A549 (cell line): ENCODE measurements at regions of chr12 and their contacts with region 1.

Region 1: GRCh38 chr12:6285063-6285477 is 25.4 kb upstream of the PLEKHG6 start:
- DNase-seq: peak; percentile 73 to 95
- ATAC-seq: peak; percentile 65 to 80
- H3K4me3 ChIP-seq: no peak overlapping the region
- H3K27ac ChIP-seq: peak overlapping the region; percentile 34 to 64; a peak in 2 of 6 replicates
- H3K4me1 ChIP-seq: peaks cover 25% of the 10 kb centered on the region
- CTCF ChIP-seq: peak; percentile 97
- EP300 ChIP-seq: no peak
- POLR2A ChIP-seq: no peak
- RAD21 ChIP-seq: peak; percentile 97 to 100

Region 2: DNA sequence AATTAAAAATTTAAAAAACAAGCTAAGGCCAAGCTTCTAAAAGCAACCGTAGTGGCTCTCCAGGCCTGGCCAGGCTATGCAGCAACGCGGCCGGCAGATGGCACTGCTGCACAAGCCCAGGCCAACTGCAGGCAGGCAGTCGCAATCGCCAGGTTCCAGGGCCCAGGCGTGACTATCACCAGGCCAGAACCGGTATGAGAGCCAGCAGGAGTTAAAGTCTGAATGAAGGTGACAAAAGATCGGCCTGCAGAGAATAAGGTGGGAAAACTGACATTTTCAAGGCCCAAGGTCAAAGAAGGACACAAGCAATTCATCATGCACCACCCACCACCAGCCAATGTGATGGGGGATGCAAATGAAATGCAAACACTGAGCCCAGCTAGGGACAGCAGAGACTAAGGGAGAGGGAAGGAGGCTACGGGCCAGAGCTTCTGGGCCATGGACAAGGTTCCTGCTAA is 296.4 kb before region 1 on chr12:
- CTCF ChIA-PET with region 1: interaction called, 60 read pairs
- POLR2A ChIA-PET with region 1: no interaction called
- DNase-seq: peak; percentile 73 to 80
- ATAC-seq: peak; percentile 92 to 99
- H3K4me3 ChIP-seq: no peak overlapping the region
- H3K27ac ChIP-seq: no peak overlapping the region
- H3K4me1 ChIP-seq: no peaks in the 10 kb centered on the region
- CTCF ChIP-seq: peak; percentile 90
- EP300 ChIP-seq: no peak
- POLR2A ChIP-seq: no peak
- RAD21 ChIP-seq: peak; percentile 94 to 95

Region 3: DNA sequence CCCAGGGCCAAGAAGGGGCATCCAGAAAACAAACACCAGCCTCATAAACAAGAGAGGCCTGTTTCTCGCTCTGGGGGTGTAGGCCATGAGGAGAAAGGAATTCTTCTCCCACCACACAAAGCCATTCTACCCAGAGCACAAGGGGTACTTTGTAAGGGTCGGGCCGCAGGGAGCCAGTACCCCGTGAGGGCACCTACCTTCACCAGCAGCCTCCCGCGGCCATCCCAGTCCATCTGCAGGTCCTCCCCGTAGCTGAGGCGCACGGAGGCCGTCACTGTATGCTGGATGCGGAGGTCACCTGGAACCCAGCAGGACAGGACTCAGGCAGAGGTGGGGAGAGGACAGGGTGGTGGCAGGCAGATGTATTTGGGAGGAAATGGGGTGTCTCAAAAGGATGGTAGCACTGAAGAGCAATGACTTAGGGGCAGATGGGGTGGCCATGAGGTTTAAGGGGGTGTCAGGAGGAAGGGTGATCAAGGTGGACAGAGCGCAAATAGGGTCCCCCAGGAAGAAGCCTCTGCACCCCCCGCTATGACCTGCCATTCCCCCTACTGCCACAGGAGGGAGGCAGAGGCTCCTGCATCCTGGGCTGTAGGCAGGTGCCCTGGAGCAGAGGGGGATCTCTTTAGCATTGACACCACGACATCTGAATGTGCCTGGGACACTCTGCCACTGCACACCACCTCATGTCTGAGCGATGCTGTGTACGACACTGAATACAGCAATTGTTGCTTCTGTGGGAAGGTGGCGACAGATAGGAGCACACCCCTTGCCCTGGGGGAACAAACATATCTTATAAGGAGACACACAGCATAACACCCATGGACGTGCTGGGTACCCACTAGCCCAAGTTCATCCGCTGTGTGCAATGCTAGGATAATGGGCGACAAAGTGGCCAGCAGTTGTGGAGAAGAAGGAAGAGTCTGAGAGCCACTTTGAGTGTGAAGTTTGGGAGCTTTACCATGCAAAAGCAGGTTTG is 222.0 kb before region 1 on chr12:
- CTCF ChIA-PET with region 1: interaction called, 144 read pairs
- POLR2A ChIA-PET with region 1: no interaction called
- DNase-seq: peak; percentile 59 to 77
- ATAC-seq: peak; percentile 71 to 90
- H3K4me3 ChIP-seq: no peak overlapping the region
- H3K27ac ChIP-seq: no peak overlapping the region
- H3K4me1 ChIP-seq: no peaks in the 10 kb centered on the region
- CTCF ChIP-seq: peak; percentile 84
- EP300 ChIP-seq: no peak
- POLR2A ChIP-seq: no peak
- RAD21 ChIP-seq: peak; percentile 91 to 96

Region 4: DNA sequence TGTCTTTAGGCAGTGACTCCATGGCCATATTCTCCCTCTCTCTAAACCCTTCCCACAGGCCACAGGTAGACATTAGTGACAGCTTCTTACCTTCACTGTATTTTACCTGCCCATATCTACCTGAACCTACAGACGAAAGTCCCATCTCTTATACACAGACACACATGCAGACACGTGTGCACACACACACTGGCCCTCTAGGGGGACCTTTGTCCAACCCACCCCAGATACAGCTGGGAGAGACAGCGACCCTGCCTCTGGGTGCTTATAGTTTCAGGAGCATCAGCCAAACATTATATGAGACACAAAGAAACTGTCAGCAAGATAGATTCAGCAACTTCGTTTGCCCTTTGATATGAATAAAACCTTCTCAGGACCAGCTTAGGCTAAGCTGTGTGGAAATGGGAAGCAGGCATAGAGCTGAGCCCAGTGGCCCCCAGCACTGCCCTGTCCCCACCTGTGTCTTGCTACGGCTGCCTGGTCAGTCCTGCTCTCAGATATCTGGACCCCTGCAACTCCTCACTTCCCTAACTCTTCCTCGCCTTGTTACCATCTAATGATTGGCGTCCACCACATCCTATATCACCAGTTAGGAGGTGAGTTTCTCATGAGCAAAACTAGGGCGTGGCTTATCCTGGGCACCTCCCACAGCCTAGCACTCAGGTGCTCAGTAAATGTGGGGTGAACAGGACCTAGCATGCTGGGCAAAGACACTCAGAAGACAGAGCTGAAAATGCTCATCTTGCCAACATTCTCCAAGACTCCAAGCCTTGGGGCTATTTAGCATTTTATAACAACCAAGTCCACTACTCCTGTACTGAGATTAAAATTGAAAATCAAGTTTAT is 96.9 kb before region 1 on chr12:
- CTCF ChIA-PET with region 1: interaction called, 529 read pairs
- POLR2A ChIA-PET with region 1: no interaction called
- DNase-seq: no peak
- ATAC-seq: peak; percentile 44 to 46; a peak in 4 of 6 replicates
- H3K4me3 ChIP-seq: no peak overlapping the region
- H3K27ac ChIP-seq: no peak overlapping the region
- H3K4me1 ChIP-seq: no peaks in the 10 kb centered on the region
- CTCF ChIP-seq: no peak
- EP300 ChIP-seq: no peak
- POLR2A ChIP-seq: no peak
- RAD21 ChIP-seq: no peak

Region 5: GRCh38 chr12:6215932-6216494 is 69.1 kb before region 1 on chr12:
- CTCF ChIA-PET with region 1: interaction called, 529 read pairs
- POLR2A ChIA-PET with region 1: no interaction called
- DNase-seq: peak; percentile 96 to 98
- ATAC-seq: peak; percentile 97 to 98
- H3K4me3 ChIP-seq: no peak overlapping the region
- H3K27ac ChIP-seq: peak overlapping the region; percentile 78 to 95
- H3K4me1 ChIP-seq: peaks cover 49% of the 10 kb centered on the region
- CTCF ChIP-seq: no peak
- EP300 ChIP-seq: no peak
- POLR2A ChIP-seq: no peak
- RAD21 ChIP-seq: no peak

Region 6: DNA sequence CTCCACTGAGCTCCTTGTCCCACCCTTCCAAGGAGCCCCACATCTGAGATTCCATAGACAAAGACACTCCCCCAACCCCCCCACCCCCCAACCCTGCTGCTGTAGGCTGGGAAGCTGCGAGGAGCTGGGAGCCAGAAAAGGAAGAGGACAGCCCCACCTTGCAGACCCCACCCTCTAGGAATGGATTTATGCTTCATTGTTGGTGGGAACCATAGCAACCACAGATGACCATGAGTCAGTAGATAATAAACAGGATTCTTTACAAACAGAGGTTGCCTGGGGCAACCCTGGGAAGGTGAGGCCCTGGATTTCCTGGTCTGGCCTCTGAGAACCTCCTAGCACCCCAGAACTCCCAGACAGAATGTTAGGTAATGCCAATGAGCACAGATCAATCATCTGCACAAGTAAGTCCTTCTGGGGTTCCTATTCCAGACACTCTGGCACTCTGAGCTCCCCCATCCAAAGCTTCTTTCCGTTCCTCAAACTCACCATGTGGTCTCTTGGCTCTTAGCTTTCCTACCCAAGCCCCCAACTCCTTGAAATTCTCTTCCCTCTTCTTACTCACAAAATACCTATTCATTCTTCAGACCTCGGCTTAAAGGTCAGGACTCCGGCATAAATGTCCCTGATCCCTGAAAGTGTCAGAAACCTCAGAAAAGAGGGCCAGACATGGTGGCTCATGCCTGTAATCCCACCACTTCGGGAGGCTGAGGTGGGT is 10.2 kb after region 1 on chr12:
- CTCF ChIA-PET with region 1: interaction called, 13 read pairs
- POLR2A ChIA-PET with region 1: interaction called, 3 read pairs
- DNase-seq: peak; percentile 93 to 97
- ATAC-seq: peak; percentile 92 to 94
- H3K4me3 ChIP-seq: no peak overlapping the region
- H3K27ac ChIP-seq: peak overlapping the region; percentile 75 to 85
- H3K4me1 ChIP-seq: peaks cover 40% of the 10 kb centered on the region
- CTCF ChIP-seq: no peak
- EP300 ChIP-seq: no peak
- POLR2A ChIP-seq: no peak
- RAD21 ChIP-seq: no peak

Region 7: DNA sequence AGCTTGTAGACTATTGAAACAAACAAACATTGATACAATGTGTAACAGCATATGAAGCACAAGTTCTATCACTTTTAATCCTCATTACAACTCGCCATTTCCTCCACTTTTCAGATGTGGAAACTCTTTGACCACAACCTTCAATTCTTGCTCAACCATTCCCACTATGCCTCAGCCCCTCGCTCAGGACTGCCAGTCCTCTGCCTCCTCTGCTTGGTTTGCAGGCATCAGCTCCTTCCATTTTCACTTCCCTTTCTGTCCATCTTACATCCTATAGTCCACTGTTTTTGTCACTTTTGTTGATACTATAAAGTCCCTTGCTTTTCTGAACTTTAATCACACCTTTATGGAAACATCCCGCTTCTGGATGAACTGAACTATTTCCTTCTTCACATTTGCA is 131.5 kb after region 1 on chr12:
- CTCF ChIA-PET with region 1: no interaction called
- POLR2A ChIA-PET with region 1: no interaction called
- DNase-seq: no peak
- ATAC-seq: no peak
- H3K4me3 ChIP-seq: no peak overlapping the region
- H3K27ac ChIP-seq: no peak overlapping the region
- H3K4me1 ChIP-seq: peaks cover 17% of the 10 kb centered on the region
- CTCF ChIP-seq: no peak
- EP300 ChIP-seq: no peak
- POLR2A ChIP-seq: no peak
- RAD21 ChIP-seq: no peak